HCT116 (cell line): ENCODE measurements at regions of chr19 and their contacts with region 1.

Region 1: DNA sequence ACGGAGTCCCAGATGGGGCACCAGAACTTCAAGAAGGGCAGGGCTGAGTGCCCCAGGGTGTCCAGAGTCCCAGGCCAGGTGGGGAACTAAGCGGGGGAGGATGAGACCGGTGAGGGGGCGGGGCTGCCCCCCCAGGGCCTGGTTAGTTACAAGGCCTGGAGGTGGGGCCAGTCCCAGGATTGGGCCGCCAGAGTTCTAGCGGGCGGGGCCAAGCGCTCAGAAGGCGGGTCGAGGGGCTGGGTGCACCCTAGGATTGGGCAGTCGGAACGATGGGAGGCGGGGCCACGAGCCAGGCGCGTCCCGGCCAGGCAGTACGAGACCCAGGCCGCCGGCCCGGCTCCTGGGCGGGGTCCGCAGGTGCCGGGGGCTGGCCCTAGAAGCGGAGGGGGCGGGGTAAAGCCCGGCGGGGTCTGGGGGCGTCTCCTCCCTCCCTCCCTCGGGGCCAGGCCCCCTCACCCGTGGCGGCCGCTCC is 571 bp downstream of the ZNF653 start:
- DNase-seq: peak; percentile 90
- ATAC-seq: peak; percentile 96
- H3K4me3 ChIP-seq: peak overlapping the region; percentile 65 to 80
- H3K27ac ChIP-seq: peak overlapping the region; percentile 89
- H3K4me1 ChIP-seq: peaks cover 0 to 13% of the 10 kb centered on the region in 2 experiments; a peak in 2 of 4 replicates
- H3K27me3 ChIP-seq: no peaks in the 10 kb centered on the region
- CTCF ChIP-seq: no peak
- POLR2A ChIP-seq: peak; percentile 12
- RAD21 ChIP-seq: no peak

Region 2: DNA sequence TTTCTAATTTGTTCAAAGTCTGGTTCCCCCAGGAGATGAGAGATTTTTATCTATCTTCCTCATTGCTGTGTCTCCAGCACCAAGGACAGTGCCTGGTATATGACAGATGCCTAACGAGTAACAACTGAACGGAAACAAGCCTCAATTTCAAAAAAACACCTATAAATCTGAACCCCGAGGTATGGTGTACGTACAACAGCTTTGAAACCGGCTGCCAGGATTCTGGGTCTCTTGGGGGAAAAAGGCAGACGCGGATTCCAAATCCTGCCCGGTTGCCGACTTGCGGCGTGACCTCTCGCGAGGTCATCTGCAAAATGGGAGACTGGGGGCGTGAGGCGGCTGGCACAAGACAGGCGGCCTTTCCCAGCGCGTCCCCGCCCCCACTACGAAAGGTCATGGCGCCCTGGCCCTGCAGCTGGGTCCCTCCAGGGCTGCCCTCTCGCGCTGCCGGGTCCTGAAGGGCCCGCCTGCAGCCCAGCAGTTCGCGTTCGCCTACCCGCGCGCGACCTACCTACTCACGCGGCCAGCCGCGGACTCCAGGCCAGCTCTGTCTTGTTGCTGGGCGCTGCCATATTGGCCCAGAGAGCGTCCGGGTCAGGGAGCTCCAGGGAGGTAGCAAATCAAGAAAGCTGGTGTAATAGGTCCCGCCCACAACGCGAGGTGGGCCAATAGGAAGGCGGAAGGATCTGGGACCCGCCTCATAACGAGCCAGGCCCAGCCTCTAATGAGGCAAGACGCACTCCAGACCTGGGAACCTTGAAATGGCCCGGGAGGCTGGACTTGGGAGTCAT is 23.7 kb after region 1 on chr19 and contains the start of gene ECSIT:
- CTCF ChIA-PET with region 1: no interaction called
- POLR2A ChIA-PET with region 1: no interaction called
- RAD21 ChIA-PET with region 1: interaction called in 1 of 2 experiments, 5 read pairs
- intact Hi-C with region 1: loop called (anchors 2 kb)
- DNase-seq: peak; percentile 97
- ATAC-seq: peak; percentile 92
- H3K4me3 ChIP-seq: peak within 1 kb of the TSS; percentile 64 to 94
- H3K27ac ChIP-seq: peak within 1 kb of the TSS; percentile 90
- H3K4me1 ChIP-seq: peaks cover 25 to 39% of the 10 kb centered on the region in 2 experiments
- H3K27me3 ChIP-seq: no peaks in the 10 kb centered on the region
- CTCF ChIP-seq: no peak
- POLR2A ChIP-seq: peak; percentile 27
- RAD21 ChIP-seq: no peak
- total RNA-seq, gene ECSIT: 52.8 TPM

Region 3: DNA sequence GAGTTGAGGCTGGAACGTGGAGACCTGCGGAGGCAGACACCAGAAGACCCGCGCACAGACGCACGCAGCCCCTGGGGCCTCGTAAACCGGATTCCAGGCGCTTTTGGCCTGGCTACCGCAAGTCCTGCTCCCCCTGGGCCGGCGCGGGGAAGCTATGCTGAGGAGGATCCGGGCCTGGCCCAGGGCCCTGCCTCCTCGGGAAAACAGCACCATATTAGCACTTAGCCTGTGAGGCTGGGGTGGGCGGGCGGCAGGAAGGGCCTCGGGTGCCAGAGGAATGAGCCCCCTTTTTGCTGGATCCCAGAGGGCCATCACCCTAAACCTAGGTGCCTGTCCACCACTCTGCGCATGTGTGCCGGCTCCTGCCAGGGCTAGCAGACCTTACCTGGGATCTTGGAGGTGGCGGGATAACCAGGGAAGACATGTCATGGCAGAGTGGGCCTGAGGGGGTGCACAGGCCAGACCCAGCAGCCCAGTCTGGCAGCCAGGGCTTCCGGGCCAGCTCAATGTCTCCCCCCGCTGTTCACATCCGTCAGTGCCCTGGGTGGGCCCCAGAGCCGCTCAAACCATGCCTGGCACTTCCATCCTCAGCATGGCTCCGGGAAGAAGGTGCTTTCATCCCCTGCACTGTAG is 46.7 kb after region 1 on chr19:
- CTCF ChIA-PET with region 1: no interaction called
- POLR2A ChIA-PET with region 1: no interaction called
- RAD21 ChIA-PET with region 1: no interaction called
- intact Hi-C with region 1: no loop called
- DNase-seq: no peak
- ATAC-seq: peak; percentile 83
- H3K4me3 ChIP-seq: no peak overlapping the region
- H3K27ac ChIP-seq: no peak overlapping the region
- H3K4me1 ChIP-seq: no peaks in the 10 kb centered on the region
- H3K27me3 ChIP-seq: no peaks in the 10 kb centered on the region
- CTCF ChIP-seq: peak; percentile 39 to 63 (median 61); a peak in 5 of 6 replicates
- POLR2A ChIP-seq: no peak
- RAD21 ChIP-seq: peak; percentile 61

Region 4: GRCh38 chr19:11766597-11767591 is 261.8 kb after region 1 on chr19 and contains the start of gene ZNF441:
- CTCF ChIA-PET with region 1: no interaction called
- POLR2A ChIA-PET with region 1: no interaction called
- RAD21 ChIA-PET with region 1: no interaction called
- intact Hi-C with region 1: no loop called
- DNase-seq: peak; percentile 79
- ATAC-seq: peak; percentile 96
- H3K4me3 ChIP-seq: peak within 1 kb of the TSS; percentile 56 to 62
- H3K27ac ChIP-seq: peak within 1 kb of the TSS; percentile 36; the same call in 1 of the 2 replicates
- H3K4me1 ChIP-seq: peaks cover 0 to 10% of the 10 kb centered on the region in 2 experiments; a peak in 1 of 4 replicates
- H3K27me3 ChIP-seq: no peaks in the 10 kb centered on the region
- CTCF ChIP-seq: no peak
- POLR2A ChIP-seq: no peak
- RAD21 ChIP-seq: no peak
- total RNA-seq, gene ZNF441: 1.1 TPM